ENCODE measurements at regions of chr11 and their contacts with region 1.

Region 1: GRCh38 chr11:89544973-89545372 is 53.8 kb upstream of the NOX4 start:
- DNase-seq: no peak
- ATAC-seq: no peak
- H3K4me3 ChIP-seq: peak overlapping the region in 1 of 2 donors; percentile 41
- H3K27ac ChIP-seq: no peak overlapping the region
- H3K4me1 ChIP-seq: peaks cover 0 to 2% of the 10 kb centered on the region in 2 donors
- H3K27me3 ChIP-seq: no peaks in the 10 kb centered on the region

Region 2: GRCh38 chr11:89436071-89436470 is 108.9 kb before region 1 on chr11:
- intact Hi-C with region 1: no loop called
- DNase-seq: peak in 1 of 2 donors; percentile 34
- ATAC-seq: no peak
- H3K4me3 ChIP-seq: no peak overlapping the region
- H3K27ac ChIP-seq: peak overlapping the region in 1 of 2 donors; percentile 36
- H3K4me1 ChIP-seq: no peaks in the 10 kb centered on the region
- H3K27me3 ChIP-seq: no peaks in the 10 kb centered on the region

Region 3: DNA sequence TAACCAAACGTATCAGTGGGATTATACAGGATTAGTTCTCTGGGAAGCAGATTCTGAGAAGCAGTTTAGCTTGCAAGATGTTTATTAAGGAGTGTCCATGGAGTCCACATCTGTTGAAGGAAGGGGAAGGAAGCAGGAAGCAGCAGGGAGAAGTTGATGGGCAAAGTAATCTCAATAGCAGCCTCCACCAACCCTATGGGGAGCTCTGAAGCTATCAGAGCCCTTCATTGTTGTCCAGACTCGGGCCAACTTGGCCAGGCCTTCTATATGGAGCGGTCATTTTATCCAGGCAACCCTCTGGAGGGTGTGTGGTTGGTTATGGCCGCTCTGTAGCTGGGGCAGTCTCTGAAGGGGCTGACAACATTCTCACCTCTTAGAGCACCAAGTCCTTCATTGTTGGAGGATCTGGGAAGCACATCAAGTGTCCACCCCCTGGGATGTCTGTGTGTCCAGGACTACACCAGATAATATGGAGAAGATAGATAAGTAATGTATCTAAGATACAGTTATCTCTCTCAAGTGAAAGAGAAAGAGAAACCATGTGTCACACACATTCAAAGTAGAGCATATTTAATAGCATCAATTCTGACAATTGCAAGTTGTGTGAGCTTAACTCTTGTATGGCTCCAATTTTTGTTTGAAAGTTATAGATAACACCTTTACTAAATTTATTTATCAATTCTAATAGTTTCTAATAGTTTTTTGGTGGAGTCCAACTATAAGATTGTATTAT is 63.4 kb after region 1 on chr11:
- intact Hi-C with region 1: loop called in 1 of 2 experiments (anchors 10 kb)
- DNase-seq: no peak
- ATAC-seq: no peak
- H3K4me3 ChIP-seq: no peak overlapping the region
- H3K27ac ChIP-seq: no peak overlapping the region
- H3K4me1 ChIP-seq: no peaks in the 10 kb centered on the region
- H3K27me3 ChIP-seq: no peaks in the 10 kb centered on the region

Measured in aorta (tissue), 5 donors.